ENCODE measurements at regions of chr11 and their contacts with region 1.

Region 1: DNA sequence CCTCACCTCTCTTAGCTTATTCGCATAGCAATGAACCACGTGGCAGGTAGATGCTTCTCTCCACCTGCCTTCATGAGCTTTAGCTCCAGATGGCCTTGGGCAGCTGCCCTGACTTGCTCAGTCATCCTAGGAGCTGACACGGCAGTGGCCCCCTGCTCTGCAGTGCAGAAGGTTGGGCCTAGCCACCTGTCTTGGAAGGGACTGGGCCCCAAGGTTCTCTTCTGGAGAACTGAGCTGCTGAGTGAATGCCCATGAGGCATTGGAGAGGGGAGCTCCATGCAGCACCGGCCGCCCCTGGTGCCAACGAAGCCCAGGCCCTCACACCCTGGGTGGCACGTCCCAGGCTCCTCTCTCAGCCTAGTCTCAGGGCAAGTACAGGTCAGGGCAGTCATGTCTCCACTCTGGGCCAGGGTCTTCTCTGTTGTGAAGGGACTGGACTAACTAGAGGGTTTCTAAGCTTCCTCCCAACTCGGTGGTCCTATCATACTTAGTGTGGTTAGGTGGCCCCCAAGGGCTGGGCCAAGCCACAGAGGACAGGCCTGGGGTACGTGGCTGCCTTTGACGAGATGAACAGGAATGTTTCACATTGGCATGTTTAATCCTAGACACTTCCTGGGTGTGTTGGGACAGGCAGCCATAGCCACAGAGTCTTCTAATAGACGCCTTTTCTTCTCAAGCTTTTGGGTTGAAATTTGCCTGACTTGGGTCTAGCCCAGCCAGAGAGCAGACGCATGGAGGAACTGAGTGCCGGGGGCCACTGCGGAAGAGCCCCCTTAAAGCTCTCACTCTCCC is 47.9 kb downstream of the ALX4 start:
- DNase-seq: no peak
- ATAC-seq: no peak
- H3K4me3 ChIP-seq: no peak overlapping the region
- H3K27ac ChIP-seq: no peak overlapping the region
- H3K4me1 ChIP-seq: no peaks in the 10 kb centered on the region
- H3K27me3 ChIP-seq: no peaks in the 10 kb centered on the region
- CTCF ChIP-seq: no peak

Region 2: DNA sequence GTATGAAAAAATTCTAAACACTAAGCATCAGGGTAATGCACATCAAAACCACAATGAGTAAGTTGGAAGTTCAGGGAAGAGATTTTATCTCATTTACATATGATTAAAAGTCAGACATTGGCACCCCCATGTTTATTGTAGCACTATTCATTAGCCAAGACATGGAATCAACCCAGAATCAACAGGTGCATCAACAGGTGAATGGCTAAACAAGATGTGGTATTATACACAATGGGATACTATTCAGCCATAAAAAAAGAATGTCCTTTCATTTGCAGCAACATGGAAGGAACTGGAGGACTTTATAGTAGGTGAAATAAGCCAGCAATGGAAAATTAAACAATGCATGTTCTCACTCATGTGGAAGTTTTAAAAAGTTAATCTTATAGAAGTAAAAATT is 920.8 kb before region 1 on chr11:
- CTCF ChIA-PET with region 1: no interaction called
- POLR2A ChIA-PET with region 1: no interaction called
- intact Hi-C with region 1: no loop called
- DNase-seq: no peak
- ATAC-seq: no peak
- H3K4me3 ChIP-seq: no peak overlapping the region
- H3K27ac ChIP-seq: no peak overlapping the region
- H3K4me1 ChIP-seq: no peaks in the 10 kb centered on the region
- H3K27me3 ChIP-seq: no peaks in the 10 kb centered on the region
- CTCF ChIP-seq: no peak

Region 3: GRCh38 chr11:44277196-44278090 is 15.4 kb after region 1 on chr11:
- CTCF ChIA-PET with region 1: no interaction called
- POLR2A ChIA-PET with region 1: interaction called, 11 read pairs
- intact Hi-C with region 1: no loop called
- DNase-seq: no peak
- ATAC-seq: no peak
- H3K4me3 ChIP-seq: no peak overlapping the region
- H3K27ac ChIP-seq: no peak overlapping the region
- H3K4me1 ChIP-seq: no peaks in the 10 kb centered on the region
- H3K27me3 ChIP-seq: peaks cover 8% of the 10 kb centered on the region; the same call in 1 of the 2 replicates
- CTCF ChIP-seq: no peak

Region 4: DNA sequence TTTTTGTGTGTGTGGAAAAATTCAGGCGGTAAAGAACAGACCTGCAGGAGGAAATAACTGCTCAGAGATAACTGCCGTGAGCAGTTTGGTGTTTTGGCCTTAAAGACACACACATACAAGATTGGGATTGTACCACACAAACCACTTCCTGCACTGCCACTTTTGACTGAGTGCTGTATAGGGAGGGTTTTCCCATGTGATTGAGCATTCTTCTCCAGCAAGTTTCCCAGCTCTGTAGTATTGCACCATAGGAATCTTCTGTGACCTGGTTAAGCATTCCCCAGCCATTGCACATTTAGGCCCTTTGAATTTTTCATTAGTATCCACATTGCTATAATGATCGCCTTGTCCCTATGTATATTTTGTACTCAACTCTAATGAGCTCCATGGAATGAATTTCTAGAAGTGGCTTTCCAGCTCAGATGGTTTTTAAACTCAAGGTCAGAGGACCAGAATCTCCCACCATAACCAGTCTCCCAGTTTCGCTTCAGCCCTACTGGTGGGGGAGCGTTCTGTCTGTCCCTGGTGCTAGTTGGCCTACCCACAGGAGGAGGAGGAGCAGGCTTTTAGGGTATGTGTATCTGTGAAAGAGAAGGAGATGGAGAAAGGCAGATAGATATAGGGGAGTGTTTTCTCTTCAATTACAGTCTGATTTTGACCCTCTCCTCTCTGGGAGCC is 312.8 kb after region 1 on chr11:
- CTCF ChIA-PET with region 1: no interaction called
- POLR2A ChIA-PET with region 1: no interaction called
- intact Hi-C with region 1: no loop called
- DNase-seq: peak; percentile 57
- ATAC-seq: no peak
- H3K4me3 ChIP-seq: no peak overlapping the region
- H3K27ac ChIP-seq: 0 out of 2 replicates have a peak overlapping the region, but pooled peaks have one; percentile 2
- H3K4me1 ChIP-seq: peaks cover 8% of the 10 kb centered on the region; the same call in 1 of the 2 replicates
- H3K27me3 ChIP-seq: no peaks in the 10 kb centered on the region
- CTCF ChIP-seq: no peak

Measured in PC-3 (cell line).